ENCODE measurements at regions of chr5 and their contacts with region 1.

Region 1: GRCh38 chr5:177447606-177448243 is 1.1 kb downstream of the PRR7 start:
- DNase-seq: no peak
- H3K4me3 ChIP-seq: no peak overlapping the region
- H3K27ac ChIP-seq: no peak overlapping the region
- H3K4me1 ChIP-seq: peaks cover 4% of the 10 kb centered on the region
- H3K27me3 ChIP-seq: no peaks in the 10 kb centered on the region
- CTCF ChIP-seq: no peak

Region 2: DNA sequence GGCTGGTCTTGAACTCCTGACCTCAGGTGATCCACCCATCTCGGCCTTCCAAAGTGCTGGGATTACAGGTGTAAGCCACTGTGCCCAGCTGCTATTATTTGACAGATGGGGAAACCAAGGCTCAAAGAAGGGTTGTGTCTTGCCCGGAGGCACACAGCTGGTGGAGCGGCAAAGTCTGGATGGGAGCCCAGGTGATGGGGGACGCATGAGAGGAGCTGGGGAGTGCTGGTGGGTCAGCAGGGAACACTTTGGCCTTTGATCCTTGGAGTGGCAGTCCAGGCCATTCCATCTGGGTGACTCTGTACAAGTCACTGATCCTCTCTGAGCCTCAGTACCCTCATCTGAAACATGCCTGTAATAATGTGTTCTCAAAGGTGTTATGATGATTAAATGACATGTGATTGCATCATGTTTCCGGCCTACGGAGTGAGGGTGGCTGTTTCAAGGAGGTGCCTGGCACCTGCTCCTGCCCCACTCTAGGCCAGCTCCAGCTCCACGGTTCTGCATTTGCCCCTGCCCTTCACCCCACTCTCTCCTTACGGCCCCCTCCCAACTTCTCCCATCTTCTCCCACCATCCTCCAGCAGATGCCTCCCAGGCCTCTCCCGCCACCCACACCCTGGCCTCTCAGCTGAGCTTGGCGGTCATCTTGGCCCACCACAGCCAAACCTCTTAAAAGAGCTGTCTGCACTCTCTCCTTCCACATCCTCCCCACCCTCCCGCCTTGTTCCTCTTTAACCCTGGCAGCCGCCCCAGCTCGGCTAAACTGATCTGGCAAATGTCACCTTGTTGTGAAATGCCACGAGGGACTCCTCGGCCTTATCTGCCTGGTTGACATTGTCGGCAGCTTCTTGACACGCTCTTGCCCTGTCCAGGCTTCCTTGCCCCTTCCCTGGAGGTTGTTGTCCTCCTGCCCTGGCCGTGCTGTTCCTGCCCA is 31.3 kb after region 1 on chr5:
- CTCF ChIA-PET with region 1: no interaction called
- POLR2A ChIA-PET with region 1: interaction called, 13 read pairs
- intact Hi-C with region 1: no loop called
- DNase-seq: no peak
- H3K4me3 ChIP-seq: no peak overlapping the region
- H3K27ac ChIP-seq: peak overlapping the region; percentile 65
- H3K4me1 ChIP-seq: peaks cover 3% of the 10 kb centered on the region
- H3K27me3 ChIP-seq: no peaks in the 10 kb centered on the region
- CTCF ChIP-seq: no peak

Region 3: GRCh38 chr5:178564811-178565550 is 1117.3 kb after region 1 on chr5:
- CTCF ChIA-PET with region 1: no interaction called
- POLR2A ChIA-PET with region 1: no interaction called
- intact Hi-C with region 1: no loop called
- DNase-seq: no peak
- H3K4me3 ChIP-seq: no peak overlapping the region
- H3K27ac ChIP-seq: no peak overlapping the region
- H3K4me1 ChIP-seq: peaks cover 11% of the 10 kb centered on the region
- H3K27me3 ChIP-seq: no peaks in the 10 kb centered on the region
- CTCF ChIP-seq: no peak